WTC11 (cell line): ENCODE measurements at regions of chr1 and their contacts with region 1.

Region 1: GRCh38 chr1:180636138-180636537 is 4.3 kb downstream of the XPR1 start:
- DNase-seq: no peak
- ATAC-seq: no peak
- H3K4me3 Mint-ChIP-seq: no peak overlapping the region
- H3K27ac Mint-ChIP-seq: 0 out of 2 replicates have a peak overlapping the region, but pooled peaks have one; percentile 12
- H3K4me1 Mint-ChIP-seq: peaks cover 23% of the 10 kb centered on the region
- H3K27me3 Mint-ChIP-seq: no peaks in the 10 kb centered on the region
- CTCF ChIP-seq: no peak

Region 2: GRCh38 chr1:180269761-180270527 is 366.2 kb before region 1 on chr1:
- CTCF ChIA-PET with region 1: no interaction called
- POLR2A ChIA-PET with region 1: no interaction called
- DNase-seq: peak; percentile 71
- ATAC-seq: peak; percentile 85
- H3K4me3 Mint-ChIP-seq: no peak overlapping the region
- H3K27ac Mint-ChIP-seq: peak overlapping the region; percentile 51
- H3K4me1 Mint-ChIP-seq: peaks cover 59% of the 10 kb centered on the region
- H3K27me3 Mint-ChIP-seq: no peaks in the 10 kb centered on the region
- CTCF ChIP-seq: no peak; the same call in 1 of the 2 replicates

Region 3: GRCh38 chr1:180863158-180863775 is 227.1 kb after region 1 on chr1:
- CTCF ChIA-PET with region 1: interaction called, 10 read pairs
- POLR2A ChIA-PET with region 1: no interaction called
- DNase-seq: no peak
- ATAC-seq: no peak
- H3K4me3 Mint-ChIP-seq: no peak overlapping the region
- H3K27ac Mint-ChIP-seq: no peak overlapping the region
- H3K4me1 Mint-ChIP-seq: no peaks in the 10 kb centered on the region
- H3K27me3 Mint-ChIP-seq: no peaks in the 10 kb centered on the region
- CTCF ChIP-seq: peak; percentile 45